ENCODE measurements at regions of chr17 and their contacts with region 1.

Region 1: GRCh38 chr17:63827002-63827771 is at the starts of genes FTSJ3 and PSMC5:
- DNase-seq: peak; percentile 98
- ATAC-seq: peak; percentile 89
- H3K4me3 ChIP-seq: peak within 1 kb of the TSS; percentile 81 to 85
- H3K27ac ChIP-seq: peak within 1 kb of the TSS; percentile 81
- H3K4me1 ChIP-seq: peaks cover 8 to 16% of the 10 kb centered on the region in 2 experiments
- H3K27me3 ChIP-seq: no peaks in the 10 kb centered on the region
- CTCF ChIP-seq: peak in 2 of 3 experiments; percentile 35 to 53; a peak in 3 of 6 replicates
- POLR2A ChIP-seq: peak; percentile 89
- RAD21 ChIP-seq: no peak
- total RNA-seq, gene FTSJ3: 70.9 TPM
- total RNA-seq, gene PSMC5: 193 TPM

Region 2: GRCh38 chr17:63697341-63698286 is 129.6 kb before region 1 on chr17:
- CTCF ChIA-PET with region 1: no interaction called
- POLR2A ChIA-PET with region 1: no interaction called
- RAD21 ChIA-PET with region 1: no interaction called
- intact Hi-C with region 1: loop called (anchors 5 kb)
- DNase-seq: peak; percentile 27
- ATAC-seq: peak; percentile 71
- H3K4me3 ChIP-seq: no peak overlapping the region
- H3K27ac ChIP-seq: no peak overlapping the region
- H3K4me1 ChIP-seq: peaks cover 5 to 30% of the 10 kb centered on the region in 2 experiments
- H3K27me3 ChIP-seq: no peaks in the 10 kb centered on the region
- CTCF ChIP-seq: peak; percentile 85 to 89 (median 87)
- POLR2A ChIP-seq: no peak
- RAD21 ChIP-seq: peak; percentile 77

Region 3: GRCh38 chr17:63780522-63780921 is 46.7 kb before region 1 on chr17:
- CTCF ChIA-PET with region 1: no interaction called
- POLR2A ChIA-PET with region 1: no interaction called
- RAD21 ChIA-PET with region 1: no interaction called
- intact Hi-C with region 1: no loop called
- DNase-seq: peak; percentile 31
- ATAC-seq: peak; percentile 66
- H3K4me3 ChIP-seq: no peak overlapping the region
- H3K27ac ChIP-seq: peak overlapping the region; percentile 34
- H3K4me1 ChIP-seq: peaks cover 26 to 64% of the 10 kb centered on the region in 2 experiments
- H3K27me3 ChIP-seq: no peaks in the 10 kb centered on the region
- CTCF ChIP-seq: no peak
- POLR2A ChIP-seq: no peak
- RAD21 ChIP-seq: no peak

Region 4: DNA sequence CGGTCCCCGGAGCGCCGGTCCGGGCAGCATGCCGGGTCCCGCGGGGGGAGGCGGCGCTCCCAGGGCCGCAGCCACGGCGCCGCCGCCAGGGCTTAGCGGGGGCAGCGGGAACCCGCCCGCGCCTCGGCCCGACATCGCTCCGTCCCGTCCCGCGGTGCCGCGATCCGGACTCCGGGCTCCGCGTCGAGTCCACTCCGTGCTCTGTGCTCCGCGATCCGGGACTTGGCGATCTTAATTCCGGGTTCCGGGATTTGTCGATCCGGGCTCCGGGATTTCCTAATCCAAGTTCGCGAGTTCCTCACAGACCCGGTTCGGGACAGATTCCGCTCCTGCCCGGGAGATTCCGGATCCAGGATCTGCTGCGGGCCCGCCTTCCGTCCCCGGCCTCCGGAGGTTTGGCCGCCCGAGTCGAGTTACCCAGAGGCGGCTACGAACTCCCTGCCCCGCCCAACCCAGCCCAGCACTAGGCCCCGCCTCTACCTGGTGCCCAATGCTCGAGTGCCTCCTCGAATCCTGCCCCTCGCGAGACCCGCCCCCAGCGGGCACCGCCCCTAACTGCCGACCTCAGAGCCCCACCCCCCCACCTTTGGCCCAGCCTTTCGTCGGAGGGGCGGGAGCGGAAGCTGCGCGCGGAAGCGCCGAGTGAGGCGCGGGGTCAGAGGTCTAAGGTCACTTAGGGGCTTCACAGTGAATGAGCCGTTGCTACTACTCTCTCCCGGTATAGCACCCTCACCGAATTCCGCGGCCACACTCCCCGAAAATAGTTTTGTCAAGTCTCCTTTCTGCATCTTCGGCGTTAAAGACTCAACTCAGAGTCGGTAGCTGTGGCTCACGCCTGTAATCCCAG is 15.6 kb after region 1 on chr17 and contains the start of gene SMARCD2:
- CTCF ChIA-PET with region 1: interaction called, 3 read pairs
- POLR2A ChIA-PET with region 1: interaction called, 7 read pairs
- RAD21 ChIA-PET with region 1: no interaction called
- intact Hi-C with region 1: loop called (anchors 1 kb)
- DNase-seq: peak; percentile 100
- ATAC-seq: peak; percentile 87
- H3K4me3 ChIP-seq: peak within 1 kb of the TSS; percentile 92 to 95
- H3K27ac ChIP-seq: peak within 1 kb of the TSS; percentile 96
- H3K4me1 ChIP-seq: peaks cover 40 to 46% of the 10 kb centered on the region in 2 experiments
- H3K27me3 ChIP-seq: no peaks in the 10 kb centered on the region
- CTCF ChIP-seq: no peak
- POLR2A ChIP-seq: no peak
- RAD21 ChIP-seq: no peak
- total RNA-seq, gene SMARCD2: 168 TPM